ENCODE measurements at regions of chr3 and their contacts with region 1.

Region 1: DNA sequence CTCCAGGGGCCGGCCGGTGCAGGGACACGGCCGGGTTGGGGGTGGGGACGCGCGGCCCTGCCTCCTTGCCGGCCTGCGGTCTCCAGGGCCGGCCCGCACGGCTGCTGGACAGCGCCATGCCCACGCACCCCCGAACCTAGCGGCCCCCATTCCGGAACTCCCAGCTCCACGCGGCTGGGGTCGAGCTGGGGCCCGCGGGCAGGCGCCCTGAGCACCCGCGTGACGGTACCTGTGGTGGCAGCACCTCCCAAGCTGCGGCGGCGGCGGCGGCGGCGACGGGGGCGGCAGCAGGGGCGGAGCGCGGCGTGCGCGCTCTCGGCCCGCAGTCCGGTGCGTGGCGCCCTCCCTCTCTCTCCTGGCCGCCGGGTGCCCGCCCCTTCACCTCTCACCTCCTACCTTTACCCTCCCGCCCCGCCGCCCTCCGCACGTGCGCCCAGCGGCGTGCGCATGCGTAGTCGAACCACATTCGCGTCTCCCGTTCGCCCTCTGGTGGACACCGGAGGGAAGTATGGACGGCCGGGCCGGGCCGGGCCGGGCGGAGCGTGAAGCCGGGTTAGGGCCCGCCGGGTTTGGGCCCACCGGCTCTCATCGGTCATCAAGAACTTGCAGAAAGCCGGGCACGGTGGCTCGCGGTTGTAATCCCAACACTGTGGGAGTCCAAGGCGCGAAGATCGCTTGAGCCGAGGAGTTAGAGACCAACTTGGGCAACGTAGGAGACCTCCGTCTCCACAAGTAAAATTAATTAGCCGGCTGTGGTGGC is at the start of gene SCAP:
- DNase-seq: peak; percentile 91
- ATAC-seq: peak; percentile 83
- H3K4me3 ChIP-seq: peak within 1 kb of the TSS; percentile 88
- H3K27ac ChIP-seq: peak within 1 kb of the TSS; percentile 46
- H3K4me1 ChIP-seq: peaks cover 8% of the 10 kb centered on the region
- H3K27me3 ChIP-seq: no peaks in the 10 kb centered on the region
- CTCF ChIP-seq: peak; percentile 82
- total RNA-seq, gene SCAP: 84.7 and 95.6 TPM in 2 replicates

Region 2: DNA sequence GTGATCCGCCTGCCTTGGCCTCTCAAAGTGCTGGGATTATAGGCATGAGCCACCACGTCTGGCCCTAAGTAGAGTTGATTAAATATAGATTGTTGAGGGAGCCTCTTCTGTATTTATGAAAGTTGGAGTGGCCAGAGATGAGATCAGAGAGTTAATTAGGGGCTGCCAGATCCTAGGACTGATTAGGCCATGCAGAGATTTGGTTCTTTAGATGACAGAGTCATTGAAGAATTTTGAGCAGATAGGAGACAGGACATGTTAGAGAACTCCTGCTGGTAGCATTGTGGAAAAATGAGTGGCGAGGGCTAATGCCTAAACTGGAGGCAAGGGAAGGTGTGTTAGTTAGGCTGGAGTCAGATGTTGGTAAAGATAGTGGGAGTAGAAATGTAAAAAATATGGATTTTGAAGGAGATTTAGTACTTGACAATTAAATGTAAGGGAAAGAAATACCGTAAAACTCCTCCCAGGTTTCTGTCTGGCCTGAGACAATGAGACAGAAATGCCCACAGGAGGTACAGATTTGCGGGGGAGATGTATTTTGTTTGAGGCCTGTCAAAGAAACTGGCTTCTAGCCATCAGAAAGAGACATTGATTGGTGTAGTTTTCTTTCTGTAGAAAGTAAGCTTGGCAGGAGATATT is 1763.2 kb before region 1 on chr3:
- CTCF ChIA-PET with region 1: no interaction called
- POLR2A ChIA-PET with region 1: no interaction called
- intact Hi-C with region 1: no loop called
- DNase-seq: no peak
- ATAC-seq: no peak
- H3K4me3 ChIP-seq: no peak overlapping the region
- H3K27ac ChIP-seq: no peak overlapping the region
- H3K4me1 ChIP-seq: no peaks in the 10 kb centered on the region
- H3K27me3 ChIP-seq: no peaks in the 10 kb centered on the region
- CTCF ChIP-seq: no peak

Region 3: DNA sequence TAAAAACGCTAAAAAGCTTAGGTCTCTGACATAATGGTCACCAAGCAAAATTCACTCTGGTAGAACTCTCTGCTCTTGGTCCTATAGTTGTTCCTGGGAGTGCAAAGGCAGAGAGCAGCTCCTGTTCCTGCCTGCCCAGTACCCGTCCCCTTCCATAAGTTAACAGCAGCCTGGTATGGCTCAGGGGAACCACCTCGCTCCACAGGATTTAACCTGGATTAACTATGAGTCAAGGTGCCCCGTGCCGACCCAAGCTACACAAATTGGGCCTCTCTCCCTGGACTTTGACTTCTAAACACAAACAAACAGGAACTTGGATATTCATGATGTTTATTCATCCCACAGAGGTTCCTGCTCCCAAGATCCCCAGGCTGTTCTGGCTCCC is 32.1 kb before region 1 on chr3:
- CTCF ChIA-PET with region 1: interaction called, 4 read pairs
- POLR2A ChIA-PET with region 1: no interaction called
- intact Hi-C with region 1: loop called (anchors 2 kb)
- DNase-seq: peak; percentile 65
- ATAC-seq: peak; percentile 84
- H3K4me3 ChIP-seq: no peak overlapping the region
- H3K27ac ChIP-seq: peak overlapping the region; percentile 72
- H3K4me1 ChIP-seq: peaks cover 20% of the 10 kb centered on the region
- H3K27me3 ChIP-seq: no peaks in the 10 kb centered on the region
- CTCF ChIP-seq: no peak